ENCODE measurements at regions of chr4 and their contacts with region 1.

Region 1: GRCh38 chr4:51842554-51843308 is at the start of gene DCUN1D4:
- DNase-seq: peak; percentile 98
- H3K4me3 Mint-ChIP-seq: peak within 1 kb of the TSS; percentile 91
- H3K27ac Mint-ChIP-seq: peak within 1 kb of the TSS; percentile 96
- H3K4me1 Mint-ChIP-seq: peaks cover 16% of the 10 kb centered on the region
- H3K27me3 Mint-ChIP-seq: no peaks in the 10 kb centered on the region
- total RNA-seq, gene DCUN1D4: 31.5 and 32.6 TPM in 2 replicates

Region 2: GRCh38 chr4:51895813-51896408 is 53.2 kb after region 1 on chr4:
- intact Hi-C with region 1: loop called (anchors 5 kb)
- DNase-seq: peak; percentile 29
- H3K4me3 Mint-ChIP-seq: no peak overlapping the region
- H3K27ac Mint-ChIP-seq: peak overlapping the region; percentile 35
- H3K4me1 Mint-ChIP-seq: peaks cover 15% of the 10 kb centered on the region
- H3K27me3 Mint-ChIP-seq: no peaks in the 10 kb centered on the region

Region 3: DNA sequence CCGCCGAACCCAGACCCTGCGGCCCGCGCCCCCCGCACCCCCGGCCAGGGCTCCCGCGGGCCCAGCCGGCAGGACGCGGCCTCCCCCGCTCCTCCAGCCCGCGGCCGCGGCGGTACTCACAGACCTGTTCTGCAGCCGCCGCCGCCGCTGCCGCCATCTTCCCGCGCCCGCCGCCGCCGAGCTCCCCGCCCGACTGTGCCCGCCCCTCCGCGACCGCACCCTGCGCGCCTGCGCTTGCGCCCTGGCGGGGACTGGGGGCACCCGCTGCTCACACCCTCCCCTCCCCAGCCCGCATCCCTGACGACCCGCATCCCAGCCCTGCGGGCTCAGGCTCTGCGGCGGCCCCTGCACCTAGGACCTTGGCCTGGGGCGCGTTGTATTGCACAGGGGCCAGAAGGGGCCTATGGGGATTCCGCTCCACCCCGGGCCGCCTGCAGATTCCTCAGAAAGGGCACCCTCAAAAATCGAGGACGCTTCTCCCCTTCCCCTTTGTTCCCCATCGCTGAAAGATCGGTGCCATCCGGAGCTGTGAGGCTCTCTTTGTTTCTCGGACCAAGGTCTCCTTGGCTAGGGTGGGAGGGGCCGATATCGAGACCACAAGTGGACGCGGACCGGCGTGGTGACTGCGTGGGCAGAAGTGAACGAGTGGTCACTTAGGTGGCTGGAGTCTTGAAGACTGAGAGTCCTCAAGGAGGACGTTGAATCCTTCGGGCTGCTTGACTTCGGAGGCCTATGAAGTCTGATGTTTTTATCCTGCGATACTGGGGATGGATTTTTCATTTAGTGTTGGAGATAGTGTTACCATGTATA is 195.6 kb after region 1 on chr4 and contains the start of gene SGCB:
- intact Hi-C with region 1: loop called (anchors 1 kb)
- DNase-seq: peak; percentile 66
- H3K4me3 Mint-ChIP-seq: peak within 1 kb of the TSS; percentile 86
- H3K27ac Mint-ChIP-seq: peak within 1 kb of the TSS; percentile 33
- H3K4me1 Mint-ChIP-seq: peaks cover 24% of the 10 kb centered on the region
- H3K27me3 Mint-ChIP-seq: peaks cover 33% of the 10 kb centered on the region
- total RNA-seq, gene SGCB: 21.2 and 21.5 TPM in 2 replicates